ENCODE measurements at regions of chr7 and their contacts with region 1.

Region 1: GRCh38 chr7:23043441-23043840 is 29.5 kb upstream of the HYCC1 start:
- DNase-seq: no peak
- ATAC-seq: no peak
- H3K4me3 ChIP-seq: no peak overlapping the region
- H3K4me3 Mint-ChIP-seq: no peak overlapping the region
- H3K27ac ChIP-seq: no peak overlapping the region
- H3K27ac Mint-ChIP-seq: no peak overlapping the region
- H3K4me1 ChIP-seq: no peaks in the 10 kb centered on the region
- H3K4me1 Mint-ChIP-seq: no peaks in the 10 kb centered on the region
- H3K27me3 ChIP-seq: no peaks in the 10 kb centered on the region
- H3K27me3 Mint-ChIP-seq: no peaks in the 10 kb centered on the region
- CTCF ChIP-seq: no peak

Region 2: GRCh38 chr7:23020742-23021401 is 22.6 kb before region 1 on chr7:
- CTCF ChIA-PET with region 1: interaction called, 5 read pairs
- POLR2A ChIA-PET with region 1: interaction called, 12 read pairs
- intact Hi-C with region 1: no loop called
- DNase-seq: no peak
- ATAC-seq: peak; percentile 36
- H3K4me3 ChIP-seq: no peak overlapping the region
- H3K4me3 Mint-ChIP-seq: no peak overlapping the region
- H3K27ac ChIP-seq: no peak overlapping the region
- H3K27ac Mint-ChIP-seq: peak overlapping the region; percentile 47
- H3K4me1 ChIP-seq: peaks cover 62 to 75% of the 10 kb centered on the region in 2 donors
- H3K4me1 Mint-ChIP-seq: peaks cover 75% of the 10 kb centered on the region
- H3K27me3 ChIP-seq: no peaks in the 10 kb centered on the region
- H3K27me3 Mint-ChIP-seq: no peaks in the 10 kb centered on the region
- CTCF ChIP-seq: no peak

Region 3: GRCh38 chr7:23196306-23196705 is 152.9 kb after region 1 on chr7:
- CTCF ChIA-PET with region 1: no interaction called
- POLR2A ChIA-PET with region 1: no interaction called
- intact Hi-C with region 1: no loop called
- DNase-seq: no peak
- ATAC-seq: no peak
- H3K4me3 ChIP-seq: no peak overlapping the region
- H3K4me3 Mint-ChIP-seq: no peak overlapping the region
- H3K27ac ChIP-seq: no peak overlapping the region
- H3K27ac Mint-ChIP-seq: no peak overlapping the region
- H3K4me1 ChIP-seq: no peaks in the 10 kb centered on the region
- H3K4me1 Mint-ChIP-seq: no peaks in the 10 kb centered on the region
- H3K27me3 ChIP-seq: no peaks in the 10 kb centered on the region
- H3K27me3 Mint-ChIP-seq: no peaks in the 10 kb centered on the region
- CTCF ChIP-seq: no peak

Measured in B cell (primary cell).